ENCODE measurements at regions of chr12 and their contacts with region 1.

Region 1: DNA sequence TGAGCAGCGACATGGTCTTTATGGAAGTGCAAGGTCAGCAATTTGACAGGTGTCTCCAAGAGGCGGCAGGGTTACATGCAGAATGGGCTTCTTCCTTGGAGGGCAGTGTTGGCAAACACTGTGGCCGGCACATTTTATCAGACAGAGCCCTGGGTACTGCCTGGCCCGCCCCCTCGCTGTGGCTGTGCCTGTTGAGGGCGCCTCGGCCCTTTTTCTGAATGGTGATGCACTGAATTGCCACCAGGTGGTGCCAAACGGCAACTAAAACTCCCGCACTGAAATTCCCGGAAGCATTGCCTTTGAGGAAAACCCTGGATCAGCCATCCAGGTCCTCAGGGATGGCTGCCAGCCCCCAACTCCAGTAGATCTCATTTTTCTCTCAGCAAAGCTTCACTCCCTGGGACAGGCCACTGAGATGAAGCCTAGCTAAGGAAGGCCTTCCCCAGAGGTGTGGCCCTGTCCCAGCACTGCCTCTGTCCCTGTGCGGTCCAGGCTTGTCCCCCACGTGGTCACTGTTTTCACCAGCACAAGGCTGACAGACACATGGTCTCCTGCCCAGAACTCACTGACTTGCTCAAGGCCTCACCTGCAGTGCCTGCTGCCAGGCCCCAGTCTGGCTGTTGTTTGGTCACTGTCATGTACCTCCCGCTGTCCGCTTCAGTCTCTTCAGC is 73.6 kb downstream of the TESC start:
- DNase-seq: peak in 13 of 14 experiments; percentile 14 to 69 (median 32)
- ATAC-seq: peak; percentile 55
- H3K4me3 ChIP-seq: no peak overlapping the region
- H3K4me3 Mint-ChIP-seq: no peak overlapping the region
- H3K27ac ChIP-seq: no peak overlapping the region
- H3K27ac Mint-ChIP-seq: no peak overlapping the region
- H3K4me1 ChIP-seq: peaks cover 8% of the 10 kb centered on the region
- H3K4me1 Mint-ChIP-seq: peaks cover 4% of the 10 kb centered on the region
- H3K27me3 ChIP-seq: no peaks in the 10 kb centered on the region
- H3K27me3 Mint-ChIP-seq: no peaks in the 10 kb centered on the region
- CTCF ChIP-seq: peak; percentile 87

Region 2: GRCh38 chr12:117098361-117099217 is 73.0 kb after region 1 on chr12:
- CTCF ChIA-PET with region 1: no interaction called
- POLR2A ChIA-PET with region 1: no interaction called
- intact Hi-C with region 1: no loop called
- DNase-seq: peak in 5 of 14 experiments; percentile 5 to 52 (median 25)
- ATAC-seq: peak; percentile 22
- H3K4me3 ChIP-seq: peak overlapping the region; percentile 59
- H3K4me3 Mint-ChIP-seq: peak overlapping the region; percentile 87
- H3K27ac ChIP-seq: no peak overlapping the region
- H3K27ac Mint-ChIP-seq: no peak overlapping the region
- H3K4me1 ChIP-seq: peaks cover 25% of the 10 kb centered on the region
- H3K4me1 Mint-ChIP-seq: peaks cover 11% of the 10 kb centered on the region
- H3K27me3 ChIP-seq: peaks cover 10 to 13% of the 10 kb centered on the region in 2 experiments
- H3K27me3 Mint-ChIP-seq: peaks cover 19% of the 10 kb centered on the region
- CTCF ChIP-seq: no peak

Region 3: DNA sequence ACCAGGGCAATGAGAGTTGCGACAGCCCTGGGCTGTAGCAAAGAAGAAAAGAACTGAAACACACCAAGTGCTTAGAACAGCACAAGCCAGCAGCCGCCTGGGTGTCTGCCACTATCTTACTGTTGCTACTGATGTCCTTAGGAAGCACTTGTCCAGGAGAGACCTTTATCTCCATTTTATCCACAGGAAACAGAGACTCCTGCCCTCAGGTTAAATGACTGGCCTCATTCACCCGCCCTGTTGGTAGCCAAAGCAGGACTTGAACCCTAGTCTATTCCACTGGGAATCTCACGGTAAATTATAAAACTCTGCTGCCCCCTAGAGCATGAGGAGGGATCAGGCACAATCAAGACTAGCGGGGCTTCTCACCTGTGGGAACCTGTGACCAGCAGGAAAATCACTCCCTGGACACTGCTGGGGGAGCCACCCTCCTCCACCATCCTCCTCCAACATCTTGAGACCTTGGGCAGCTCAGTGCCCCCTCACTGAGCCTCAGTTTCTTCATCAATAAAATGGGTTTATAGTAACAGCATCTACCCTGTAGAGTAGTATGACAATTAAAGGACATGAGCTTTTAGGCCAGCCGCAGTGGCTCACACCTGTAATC is 94.1 kb after region 1 on chr12:
- CTCF ChIA-PET with region 1: interaction called, 8 read pairs
- POLR2A ChIA-PET with region 1: no interaction called
- intact Hi-C with region 1: loop called in 1 of 2 experiments (anchors 1 kb)
- DNase-seq: peak in 5 of 14 experiments; percentile 8 to 56 (median 43)
- ATAC-seq: no peak
- H3K4me3 ChIP-seq: no peak overlapping the region
- H3K4me3 Mint-ChIP-seq: no peak overlapping the region
- H3K27ac ChIP-seq: no peak overlapping the region
- H3K27ac Mint-ChIP-seq: no peak overlapping the region
- H3K4me1 ChIP-seq: no peaks in the 10 kb centered on the region
- H3K4me1 Mint-ChIP-seq: no peaks in the 10 kb centered on the region
- H3K27me3 ChIP-seq: no peaks in the 10 kb centered on the region
- H3K27me3 Mint-ChIP-seq: no peaks in the 10 kb centered on the region
- CTCF ChIP-seq: peak; percentile 81

Region 4: DNA sequence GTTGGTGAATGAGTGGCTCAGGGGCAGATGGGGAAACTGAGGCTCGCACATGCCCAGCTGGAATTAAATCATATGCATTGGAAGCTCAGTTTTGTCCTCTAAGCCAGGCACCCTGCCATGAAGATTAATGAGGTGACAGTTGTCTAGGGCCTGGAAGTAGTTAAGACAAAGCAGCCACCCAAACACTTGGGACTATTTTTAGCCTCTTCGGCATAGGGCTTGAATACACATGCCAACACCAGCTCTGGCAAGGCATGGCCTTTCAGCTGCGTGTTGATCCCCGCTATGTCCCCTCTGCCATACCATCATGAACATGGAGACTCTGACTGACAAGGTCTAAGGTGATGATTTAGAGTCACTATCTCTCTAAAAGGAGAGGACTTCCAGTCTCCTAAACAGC is 692.9 kb after region 1 on chr12:
- CTCF ChIA-PET with region 1: no interaction called
- POLR2A ChIA-PET with region 1: no interaction called
- intact Hi-C with region 1: no loop called
- DNase-seq: no peak
- ATAC-seq: no peak
- H3K4me3 ChIP-seq: no peak overlapping the region
- H3K4me3 Mint-ChIP-seq: no peak overlapping the region
- H3K27ac ChIP-seq: no peak overlapping the region
- H3K27ac Mint-ChIP-seq: no peak overlapping the region
- H3K4me1 ChIP-seq: no peaks in the 10 kb centered on the region
- H3K4me1 Mint-ChIP-seq: no peaks in the 10 kb centered on the region
- H3K27me3 ChIP-seq: peaks cover 0 to 3% of the 10 kb centered on the region in 2 experiments
- H3K27me3 Mint-ChIP-seq: peaks cover 3% of the 10 kb centered on the region
- CTCF ChIP-seq: no peak

Measured in CD4-positive, alpha-beta T cell (primary cell).